ENCODE measurements at regions of chr6 and their contacts with region 1.

Region 1: DNA sequence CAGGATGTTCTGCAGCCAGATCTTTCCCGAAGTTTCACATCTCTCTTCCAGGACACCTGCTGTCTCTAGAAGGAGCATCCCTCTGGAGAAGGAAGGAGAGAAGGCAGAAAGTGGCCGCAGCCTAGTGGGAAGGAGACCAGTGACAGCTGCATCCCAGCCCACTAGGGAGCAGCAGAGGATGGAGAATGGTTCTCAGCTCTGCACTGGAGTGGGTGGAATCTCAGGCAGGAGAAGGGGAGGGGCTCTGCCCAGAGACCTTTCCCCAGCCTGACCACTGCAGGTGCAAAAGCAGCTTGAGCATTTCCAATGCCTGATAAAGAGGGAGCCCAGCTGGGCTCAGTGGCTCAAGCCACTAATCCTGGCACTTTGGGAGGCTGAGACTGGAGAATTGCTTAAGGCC is 32.3 kb downstream of the NCR2 start:
- DNase-seq: peak; percentile 46
- H3K4me3 ChIP-seq: no peak overlapping the region
- H3K27ac ChIP-seq: no peak overlapping the region
- H3K4me1 ChIP-seq: no peaks in the 10 kb centered on the region
- H3K27me3 ChIP-seq: peaks cover 34% of the 10 kb centered on the region
- CTCF ChIP-seq: peak; percentile 40

Region 2: GRCh38 chr6:41222513-41222912 is 145.2 kb before region 1 on chr6:
- intact Hi-C with region 1: no loop called
- DNase-seq: no peak
- H3K4me3 ChIP-seq: no peak overlapping the region
- H3K27ac ChIP-seq: no peak overlapping the region
- H3K4me1 ChIP-seq: no peaks in the 10 kb centered on the region
- H3K27me3 ChIP-seq: no peaks in the 10 kb centered on the region
- CTCF ChIP-seq: no peak

Region 3: GRCh38 chr6:41591859-41592502 is 224.3 kb after region 1 on chr6:
- intact Hi-C with region 1: no loop called
- DNase-seq: peak; percentile 84
- H3K4me3 ChIP-seq: no peak overlapping the region
- H3K27ac ChIP-seq: no peak overlapping the region
- H3K4me1 ChIP-seq: no peaks in the 10 kb centered on the region
- H3K27me3 ChIP-seq: no peaks in the 10 kb centered on the region
- CTCF ChIP-seq: peak; percentile 91

Region 4: DNA sequence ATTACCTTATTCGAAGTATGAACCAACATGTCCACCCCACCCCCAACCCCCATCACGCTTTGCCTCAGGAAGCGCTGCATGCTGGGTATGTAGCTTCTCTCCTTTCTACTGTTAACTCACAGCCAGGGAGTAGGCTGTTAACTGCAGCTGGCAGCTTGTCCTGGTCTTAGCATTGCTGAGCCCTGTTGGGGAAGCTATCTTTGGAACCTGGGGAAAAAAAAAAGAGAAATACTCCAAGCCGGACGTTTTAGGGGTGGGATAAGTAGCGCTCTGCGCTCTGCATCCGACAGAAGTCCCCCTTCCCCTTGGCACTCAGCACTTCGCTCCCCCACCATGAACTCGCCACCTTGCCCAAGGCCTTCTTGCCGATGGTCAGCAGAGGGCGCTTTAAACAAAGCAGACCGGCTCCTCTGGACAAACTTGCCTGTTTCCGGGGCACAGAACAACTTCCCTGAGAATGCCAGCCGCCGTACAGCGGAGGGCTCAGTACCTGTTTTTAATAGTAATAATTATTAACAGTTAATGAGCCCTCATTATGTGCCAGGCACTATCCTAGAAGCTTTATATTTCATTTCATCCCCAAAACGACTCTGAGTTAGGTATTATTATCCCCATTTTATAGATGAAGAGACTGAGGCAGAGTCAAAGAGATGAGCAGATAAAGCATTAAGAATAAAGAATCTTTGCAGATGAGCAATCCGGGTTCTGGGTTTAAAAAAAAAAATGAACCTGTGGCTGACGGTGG is 235.3 kb after region 1 on chr6:
- intact Hi-C with region 1: loop called (anchors 2 kb)
- DNase-seq: peak; percentile 88
- H3K4me3 ChIP-seq: no peak overlapping the region
- H3K27ac ChIP-seq: no peak overlapping the region
- H3K4me1 ChIP-seq: peaks cover 7% of the 10 kb centered on the region
- H3K27me3 ChIP-seq: no peaks in the 10 kb centered on the region
- CTCF ChIP-seq: peak; percentile 75

Region 5: GRCh38 chr6:41683510-41684310 is 316.0 kb after region 1 on chr6:
- intact Hi-C with region 1: loop called (anchors 2 kb)
- DNase-seq: peak; percentile 78
- H3K4me3 ChIP-seq: peak overlapping the region; percentile 39
- H3K27ac ChIP-seq: no peak overlapping the region
- H3K4me1 ChIP-seq: peaks cover 5% of the 10 kb centered on the region
- H3K27me3 ChIP-seq: no peaks in the 10 kb centered on the region
- CTCF ChIP-seq: peak; percentile 86